ENCODE measurements at regions of chr15 and their contacts with region 1.

Region 1: DNA sequence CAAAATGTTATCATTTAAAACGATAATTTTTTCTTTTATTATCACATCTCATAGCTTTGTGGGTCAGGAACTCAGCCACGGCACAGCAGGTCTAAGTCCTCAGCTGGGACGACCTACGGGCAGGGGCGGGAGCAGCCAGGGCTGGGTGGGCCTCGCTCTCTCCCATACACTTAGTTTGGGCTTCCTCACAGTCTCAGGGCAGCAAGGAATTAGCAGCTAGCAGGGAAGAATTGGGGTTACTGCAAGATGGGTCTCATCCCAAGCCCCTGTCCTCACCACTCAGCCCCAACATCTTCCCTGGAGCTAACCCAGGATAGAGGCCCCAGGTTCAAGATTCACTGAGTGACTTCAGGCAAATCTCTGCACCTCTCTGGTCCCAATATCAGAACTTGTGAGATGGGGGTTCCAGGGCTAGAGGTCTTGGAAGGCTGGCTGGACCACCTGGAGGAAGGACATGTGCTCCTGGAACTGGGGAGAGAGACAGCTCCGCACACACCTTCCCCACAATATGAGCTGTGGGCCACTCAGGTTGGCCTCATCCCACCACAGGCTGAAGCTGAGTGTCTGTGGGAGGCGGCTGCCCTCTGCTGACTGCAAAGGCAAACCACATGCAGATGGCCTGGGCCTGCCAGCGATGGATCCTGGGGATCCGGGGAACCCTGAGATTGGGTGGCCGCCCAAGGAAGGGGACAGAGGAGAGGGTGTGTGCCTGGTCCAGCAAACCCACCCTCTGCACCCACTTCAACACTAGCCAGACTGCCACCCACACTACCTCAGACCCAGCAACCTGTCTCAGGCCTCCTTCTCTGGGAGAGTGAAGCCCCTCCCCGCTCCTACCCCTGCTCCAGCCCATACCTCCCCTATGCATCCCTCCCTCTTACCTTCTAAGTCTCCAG is 45.0 kb downstream of the CYP11A1 start:
- DNase-seq: peak; percentile 53 to 76
- ATAC-seq: peak; percentile 73 to 93 (median 81)
- H3K4me3 ChIP-seq: no peak overlapping the region
- H3K4me3 Mint-ChIP-seq: no peak overlapping the region
- H3K27ac ChIP-seq: no peak overlapping the region
- H3K27ac Mint-ChIP-seq: no peak overlapping the region
- H3K4me1 ChIP-seq: peaks cover 30% of the 10 kb centered on the region
- H3K4me1 Mint-ChIP-seq: peaks cover 0 to 4% of the 10 kb centered on the region in 2 donors
- H3K27me3 ChIP-seq: no peaks in the 10 kb centered on the region
- H3K27me3 Mint-ChIP-seq: peaks cover 0 to 5% of the 10 kb centered on the region in 2 donors
- CTCF ChIP-seq: peak; percentile 70

Region 2: DNA sequence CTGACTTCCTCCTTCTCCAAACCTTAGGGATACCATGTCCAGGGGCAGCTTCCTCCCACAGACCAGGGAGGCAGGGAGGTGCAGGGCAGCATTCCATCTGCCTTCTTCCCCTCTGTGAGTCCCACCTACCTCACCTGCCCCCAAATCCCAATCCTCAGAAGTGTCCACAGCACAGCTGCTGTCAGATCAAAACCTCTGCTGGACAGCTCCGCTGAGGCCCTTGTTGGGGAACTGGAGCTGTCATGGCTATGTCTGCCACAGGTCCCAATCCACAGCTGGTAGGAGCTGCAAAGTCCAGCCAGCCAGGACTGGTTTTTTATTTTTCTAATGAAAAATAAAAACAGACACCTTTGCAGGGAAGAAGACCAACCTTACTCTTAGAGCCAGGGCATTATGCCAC is 489.8 kb before region 1 on chr15:
- intact Hi-C with region 1: no loop called
- DNase-seq: no peak
- ATAC-seq: no peak
- H3K4me3 ChIP-seq: no peak overlapping the region
- H3K4me3 Mint-ChIP-seq: no peak overlapping the region
- H3K27ac ChIP-seq: no peak overlapping the region
- H3K27ac Mint-ChIP-seq: no peak overlapping the region
- H3K4me1 ChIP-seq: no peaks in the 10 kb centered on the region
- H3K4me1 Mint-ChIP-seq: no peaks in the 10 kb centered on the region
- H3K27me3 ChIP-seq: no peaks in the 10 kb centered on the region
- H3K27me3 Mint-ChIP-seq: peaks cover 24 to 57% of the 10 kb centered on the region in 2 donors
- CTCF ChIP-seq: no peak

Region 3: DNA sequence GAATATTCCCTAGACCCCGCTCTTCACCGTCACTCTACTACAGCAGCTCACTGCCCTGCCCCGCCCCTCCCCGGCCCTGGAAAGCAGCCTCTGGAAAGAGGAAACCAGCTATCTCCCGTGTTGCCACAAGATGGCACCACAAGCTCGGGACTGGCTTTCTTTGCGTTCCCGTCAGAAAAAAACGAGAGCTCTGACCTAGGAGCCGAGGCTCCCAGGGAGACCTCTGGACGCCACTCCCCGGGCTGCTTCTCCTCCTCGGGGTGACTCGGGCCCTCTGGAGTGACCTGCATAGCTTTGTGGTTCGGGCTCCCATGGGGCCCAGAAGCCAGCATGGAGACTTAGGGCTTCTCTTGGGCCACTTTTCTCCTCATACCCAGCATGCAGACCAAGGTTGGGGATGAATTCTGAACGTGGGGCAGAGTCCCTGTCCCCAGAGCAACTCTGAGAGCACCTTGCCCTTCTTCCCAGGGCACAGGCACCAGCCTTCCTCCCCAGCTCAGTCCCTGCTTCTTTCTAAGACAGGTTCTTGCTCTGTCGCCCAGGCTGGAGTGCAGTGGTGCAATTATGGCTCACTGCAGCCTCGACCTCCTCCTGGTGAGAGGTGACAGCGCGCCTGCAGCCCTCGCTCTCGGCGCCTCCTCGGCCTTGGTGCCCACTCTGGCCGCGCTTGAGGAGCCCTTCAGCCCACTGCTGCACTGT is 349.3 kb before region 1 on chr15:
- intact Hi-C with region 1: loop called (anchors 5 kb)
- DNase-seq: peak; percentile 58 to 89
- ATAC-seq: peak; percentile 80 to 91 (median 88)
- H3K4me3 ChIP-seq: no peak overlapping the region
- H3K4me3 Mint-ChIP-seq: no peak overlapping the region
- H3K27ac ChIP-seq: no peak overlapping the region
- H3K27ac Mint-ChIP-seq: no peak overlapping the region
- H3K4me1 ChIP-seq: peaks cover 12% of the 10 kb centered on the region
- H3K4me1 Mint-ChIP-seq: peaks cover 0 to 7% of the 10 kb centered on the region in 2 donors
- H3K27me3 ChIP-seq: peaks cover 7% of the 10 kb centered on the region
- H3K27me3 Mint-ChIP-seq: peaks cover 26% of the 10 kb centered on the region in 2 donors
- CTCF ChIP-seq: peak; percentile 77

Region 4: DNA sequence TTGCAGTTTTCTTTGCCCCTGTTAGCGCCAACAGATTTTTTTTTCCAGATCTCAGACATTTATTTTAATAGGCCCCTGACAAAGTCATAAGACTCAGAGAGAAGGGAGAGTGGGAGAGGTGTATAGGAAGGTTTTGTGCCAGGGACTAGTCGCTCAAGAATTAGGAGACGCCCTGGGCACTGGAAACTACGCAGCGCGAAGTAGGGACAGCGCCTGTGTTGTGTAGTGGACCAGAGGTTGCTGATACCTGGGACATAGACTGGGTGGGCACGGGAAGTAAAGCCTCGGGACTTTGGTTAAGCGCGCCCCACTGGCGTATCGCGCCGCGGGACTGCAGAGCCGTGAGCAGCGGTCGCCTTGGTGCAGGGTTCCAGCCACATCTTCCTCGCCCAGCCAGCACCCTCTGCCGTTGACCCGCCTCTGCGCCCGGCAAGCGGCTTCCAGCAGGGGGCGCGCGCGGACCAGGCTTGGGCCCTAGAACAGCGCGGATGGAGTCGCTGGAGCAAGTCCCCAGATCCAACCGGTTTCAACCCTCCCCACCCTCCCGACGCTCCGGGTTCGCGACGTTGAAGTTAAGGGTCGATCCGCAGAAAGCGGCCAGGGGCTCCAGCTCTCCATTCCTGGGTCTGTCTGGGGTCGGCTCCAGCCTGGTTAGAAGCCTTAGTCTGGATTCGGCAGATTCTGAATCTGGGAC is 195.0 kb before region 1 on chr15:
- intact Hi-C with region 1: loop called (anchors 1 kb)
- DNase-seq: peak; percentile 82 to 85
- ATAC-seq: peak; percentile 82 to 96 (median 93)
- H3K4me3 ChIP-seq: no peak overlapping the region
- H3K4me3 Mint-ChIP-seq: peak overlapping the region; percentile 5
- H3K27ac ChIP-seq: no peak overlapping the region
- H3K27ac Mint-ChIP-seq: no peak overlapping the region
- H3K4me1 ChIP-seq: peaks cover 31% of the 10 kb centered on the region
- H3K4me1 Mint-ChIP-seq: no peaks in the 10 kb centered on the region
- H3K27me3 ChIP-seq: peaks cover 41% of the 10 kb centered on the region
- H3K27me3 Mint-ChIP-seq: peaks cover 57 to 58% of the 10 kb centered on the region in 2 donors
- CTCF ChIP-seq: peak; percentile 89

Region 5: DNA sequence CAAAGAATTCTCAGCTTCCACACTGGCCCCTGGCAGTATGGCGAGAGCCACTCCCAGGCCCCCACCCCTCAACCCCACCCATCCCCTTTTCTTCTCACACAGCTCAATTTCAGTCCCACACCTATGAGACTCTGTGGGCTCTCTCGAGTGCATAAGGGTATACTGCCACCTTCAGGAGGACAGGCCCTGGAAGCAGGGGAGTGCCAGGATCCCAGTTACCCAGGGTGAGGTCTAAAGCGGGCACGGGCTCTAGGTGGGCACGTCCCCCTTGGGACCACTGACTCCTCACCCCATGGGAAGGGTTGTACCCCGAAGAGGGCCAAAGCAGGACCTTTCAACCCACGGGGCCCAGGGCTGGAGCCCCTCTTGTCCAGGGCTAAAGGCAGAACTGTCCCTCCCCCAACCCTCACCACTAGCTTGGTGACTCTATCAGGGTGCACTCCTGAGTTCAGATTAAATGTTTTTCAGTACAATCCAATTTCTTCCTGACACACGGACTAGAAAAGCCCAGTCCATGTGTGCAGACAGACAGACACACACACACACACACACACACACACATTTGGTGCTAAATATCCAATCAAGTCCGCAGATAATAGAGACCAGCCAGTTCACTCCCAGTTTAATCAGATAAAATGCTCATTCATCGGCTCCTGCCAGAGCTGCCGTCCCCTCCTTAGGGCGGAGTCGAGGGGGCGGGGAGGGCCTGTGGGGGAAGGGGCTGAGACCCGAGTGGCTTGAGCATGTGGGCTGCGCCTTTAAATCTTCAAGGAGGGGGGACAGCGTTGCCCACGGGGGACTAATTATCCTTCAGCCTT is 14.4 kb before region 1 on chr15:
- intact Hi-C with region 1: no loop called
- DNase-seq: peak in 1 of 2 donors; percentile 58
- ATAC-seq: peak in 2 of 3 donors; percentile 28 to 55
- H3K4me3 ChIP-seq: no peak overlapping the region
- H3K4me3 Mint-ChIP-seq: no peak overlapping the region
- H3K27ac ChIP-seq: no peak overlapping the region
- H3K27ac Mint-ChIP-seq: no peak overlapping the region
- H3K4me1 ChIP-seq: no peaks in the 10 kb centered on the region
- H3K4me1 Mint-ChIP-seq: no peaks in the 10 kb centered on the region
- H3K27me3 ChIP-seq: no peaks in the 10 kb centered on the region
- H3K27me3 Mint-ChIP-seq: peaks cover 14 to 20% of the 10 kb centered on the region in 2 donors
- CTCF ChIP-seq: no peak